Endothelial cell of umbilical vein (primary cell): ENCODE measurements at regions of chr12 and their contacts with region 1.

Region 1: GRCh38 chr12:1093166-1093751 is 102.2 kb downstream of the ERC1 start:
- DNase-seq: peak; percentile 73
- H3K4me3 ChIP-seq: no peak overlapping the region
- H3K27ac ChIP-seq: no peak overlapping the region
- H3K4me1 ChIP-seq: no peaks in the 10 kb centered on the region
- H3K27me3 ChIP-seq: no peaks in the 10 kb centered on the region
- CTCF ChIP-seq: peak; percentile 53 to 58
- POLR2A ChIP-seq: no peak

Region 2: DNA sequence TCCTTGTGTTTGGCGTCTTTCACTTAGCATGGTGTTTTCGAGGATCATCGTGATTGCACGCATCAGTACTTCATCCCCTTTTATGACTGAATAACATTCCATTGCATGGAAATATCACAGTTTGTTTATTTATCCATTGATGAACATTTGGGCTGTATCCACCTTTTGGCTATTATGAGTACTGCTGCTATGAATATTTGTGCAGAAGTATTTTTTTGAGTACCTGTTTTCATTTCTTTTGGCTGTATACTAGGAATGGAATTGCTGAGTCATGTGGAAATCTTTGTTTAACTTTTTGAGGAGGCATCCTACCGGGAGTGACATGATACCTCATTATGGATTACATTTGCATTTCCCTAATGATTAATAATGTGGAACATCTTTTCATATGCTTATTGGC is 274.5 kb before region 1 on chr12:
- CTCF ChIA-PET with region 1: interaction called, 27 read pairs
- POLR2A ChIA-PET with region 1: no interaction called
- dilution Hi-C with region 1: no loop called
- intact Hi-C with region 1: loop called (anchors 5 kb)
- DNase-seq: no peak
- H3K4me3 ChIP-seq: no peak overlapping the region
- H3K27ac ChIP-seq: no peak overlapping the region
- H3K4me1 ChIP-seq: no peaks in the 10 kb centered on the region
- H3K27me3 ChIP-seq: no peaks in the 10 kb centered on the region
- CTCF ChIP-seq: no peak
- POLR2A ChIP-seq: no peak

Region 3: DNA sequence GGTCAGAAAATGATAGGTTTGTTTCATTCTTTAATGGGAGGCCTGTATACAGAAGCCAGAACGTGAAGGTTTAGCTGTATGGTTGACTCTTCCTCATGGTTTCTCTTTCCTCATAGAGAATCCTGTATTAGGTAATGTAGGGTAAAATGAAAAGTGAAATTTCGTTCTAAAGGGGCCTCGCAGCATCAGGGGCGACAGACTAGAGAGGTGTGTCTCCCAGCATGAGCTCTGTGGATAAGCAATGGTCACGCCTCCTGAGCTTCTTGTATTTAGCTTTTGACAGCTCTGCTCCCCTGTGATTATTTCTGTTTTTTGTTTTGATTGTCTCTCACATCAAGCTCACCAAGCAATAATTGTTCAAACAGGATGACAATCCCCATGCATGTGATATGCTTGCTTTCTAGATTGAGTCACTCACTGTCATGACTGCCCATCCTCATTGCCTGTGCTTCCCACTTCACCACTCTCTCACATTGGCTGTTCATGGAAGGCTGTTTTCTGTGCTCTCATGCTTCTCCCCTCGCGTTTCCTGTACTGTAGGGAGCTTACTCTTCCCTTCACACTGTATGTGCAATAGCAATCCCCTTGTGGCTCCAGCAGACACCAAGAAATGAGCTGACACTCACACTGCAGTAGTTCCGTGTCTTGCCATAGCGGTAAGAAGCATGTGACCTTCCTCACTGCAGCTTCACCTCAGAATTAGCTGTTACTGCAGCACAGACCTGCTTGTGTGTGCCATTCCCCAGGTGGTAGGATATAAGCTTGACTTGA is 187.8 kb before region 1 on chr12:
- CTCF ChIA-PET with region 1: interaction called, 53 read pairs
- POLR2A ChIA-PET with region 1: no interaction called
- dilution Hi-C with region 1: no loop called
- intact Hi-C with region 1: loop called (anchors 5 kb)
- DNase-seq: no peak
- H3K4me3 ChIP-seq: no peak overlapping the region
- H3K27ac ChIP-seq: no peak overlapping the region
- H3K4me1 ChIP-seq: no peaks in the 10 kb centered on the region
- H3K27me3 ChIP-seq: no peaks in the 10 kb centered on the region
- CTCF ChIP-seq: no peak
- POLR2A ChIP-seq: no peak

Region 4: DNA sequence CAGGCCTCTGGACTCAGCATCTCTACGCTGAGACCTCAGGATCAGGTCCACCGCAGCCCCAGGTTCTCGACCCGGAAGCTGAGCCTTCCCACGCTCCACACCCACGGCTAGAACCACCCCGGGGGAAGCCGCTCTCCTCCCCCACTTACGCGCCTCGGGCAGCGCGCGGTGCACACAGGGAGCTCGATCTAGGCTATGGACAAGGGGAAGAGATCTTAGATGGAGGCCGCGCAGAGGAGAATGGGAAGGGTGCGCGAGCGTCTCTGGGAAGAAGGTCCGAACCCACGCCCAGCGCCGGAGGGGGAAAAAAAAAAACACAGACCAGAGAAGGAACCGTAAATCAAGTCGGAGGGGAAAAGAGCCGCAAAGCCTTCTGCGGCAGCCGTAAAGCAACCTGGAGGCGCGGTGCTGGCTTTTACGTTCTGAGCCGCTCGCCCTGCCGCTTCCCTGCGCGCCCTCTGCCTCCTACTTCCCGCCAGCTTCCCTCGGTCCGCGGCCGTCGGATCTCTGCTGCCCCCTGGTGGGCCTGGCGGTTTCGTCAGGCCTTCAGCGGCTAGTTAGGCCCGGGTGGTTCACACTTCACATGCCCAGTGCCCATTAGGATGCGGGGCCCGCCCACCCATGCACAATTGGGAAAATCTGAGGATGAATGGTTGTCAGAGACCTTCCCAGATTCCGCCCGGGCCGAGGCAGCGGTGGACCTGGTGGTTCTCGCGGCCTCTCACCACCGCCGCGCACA is 143.6 kb before region 1 on chr12 and contains the start of gene RAD52:
- CTCF ChIA-PET with region 1: interaction called, 64 read pairs
- POLR2A ChIA-PET with region 1: interaction called, 4 read pairs
- dilution Hi-C with region 1: no loop called
- intact Hi-C with region 1: loop called (anchors 5 kb)
- DNase-seq: peak; percentile 99
- H3K4me3 ChIP-seq: peak within 1 kb of the TSS; percentile 67 to 81 (median 76)
- H3K27ac ChIP-seq: peak within 1 kb of the TSS; percentile 41
- H3K4me1 ChIP-seq: peaks cover 15% of the 10 kb centered on the region
- H3K27me3 ChIP-seq: no peaks in the 10 kb centered on the region
- CTCF ChIP-seq: peak; percentile 93 to 97
- POLR2A ChIP-seq: no peak
- total RNA-seq, gene RAD52: 10.2 and 16.1 TPM in 2 replicates

Region 5: GRCh38 chr12:990661-991349 is 102.5 kb before region 1 on chr12 and contains the start of gene ERC1:
- CTCF ChIA-PET with region 1: interaction called, 66 read pairs
- POLR2A ChIA-PET with region 1: interaction called, 13 read pairs
- dilution Hi-C with region 1: no loop called
- intact Hi-C with region 1: loop called (anchors 5 kb)
- DNase-seq: peak; percentile 82
- H3K4me3 ChIP-seq: peak within 1 kb of the TSS; percentile 80 to 94 (median 80)
- H3K27ac ChIP-seq: peak within 1 kb of the TSS; percentile 80
- H3K4me1 ChIP-seq: peaks cover 25% of the 10 kb centered on the region
- H3K27me3 ChIP-seq: no peaks in the 10 kb centered on the region
- CTCF ChIP-seq: peak in 1 of 2 donors; percentile 9
- POLR2A ChIP-seq: peak; percentile 60
- total RNA-seq, gene ERC1: 60.0 and 66.1 TPM in 2 replicates

Region 6: GRCh38 chr12:1069846-1070245 is 23.4 kb before region 1 on chr12:
- CTCF ChIA-PET with region 1: interaction called, 23 read pairs
- POLR2A ChIA-PET with region 1: no interaction called
- dilution Hi-C with region 1: no loop called
- intact Hi-C with region 1: no loop called
- DNase-seq: peak; percentile 29
- H3K4me3 ChIP-seq: no peak overlapping the region
- H3K27ac ChIP-seq: no peak overlapping the region
- H3K4me1 ChIP-seq: peaks cover 7% of the 10 kb centered on the region
- H3K27me3 ChIP-seq: no peaks in the 10 kb centered on the region
- CTCF ChIP-seq: no peak
- POLR2A ChIP-seq: no peak

Region 7: GRCh38 chr12:1162081-1162760 is 69.0 kb after region 1 on chr12:
- CTCF ChIA-PET with region 1: no interaction called
- POLR2A ChIA-PET with region 1: no interaction called
- dilution Hi-C with region 1: no loop called
- intact Hi-C with region 1: no loop called
- DNase-seq: no peak
- H3K4me3 ChIP-seq: no peak overlapping the region
- H3K27ac ChIP-seq: no peak overlapping the region
- H3K4me1 ChIP-seq: peaks cover 4% of the 10 kb centered on the region
- H3K27me3 ChIP-seq: no peaks in the 10 kb centered on the region
- CTCF ChIP-seq: no peak
- POLR2A ChIP-seq: no peak

Region 8: GRCh38 chr12:1185460-1186182 is 92.4 kb after region 1 on chr12:
- CTCF ChIA-PET with region 1: no interaction called
- POLR2A ChIA-PET with region 1: no interaction called
- dilution Hi-C with region 1: no loop called
- intact Hi-C with region 1: no loop called
- DNase-seq: no peak
- H3K4me3 ChIP-seq: no peak overlapping the region
- H3K27ac ChIP-seq: peak overlapping the region; percentile 74
- H3K4me1 ChIP-seq: peaks cover 21% of the 10 kb centered on the region
- H3K27me3 ChIP-seq: no peaks in the 10 kb centered on the region
- CTCF ChIP-seq: no peak
- POLR2A ChIP-seq: no peak

Region 9: GRCh38 chr12:1488908-1489381 is 395.7 kb after region 1 on chr12:
- CTCF ChIA-PET with region 1: no interaction called
- POLR2A ChIA-PET with region 1: no interaction called
- dilution Hi-C with region 1: no loop called
- intact Hi-C with region 1: no loop called
- DNase-seq: no peak
- H3K4me3 ChIP-seq: no peak overlapping the region
- H3K27ac ChIP-seq: no peak overlapping the region
- H3K4me1 ChIP-seq: no peaks in the 10 kb centered on the region
- H3K27me3 ChIP-seq: no peaks in the 10 kb centered on the region
- CTCF ChIP-seq: no peak
- POLR2A ChIP-seq: no peak

Region 10: DNA sequence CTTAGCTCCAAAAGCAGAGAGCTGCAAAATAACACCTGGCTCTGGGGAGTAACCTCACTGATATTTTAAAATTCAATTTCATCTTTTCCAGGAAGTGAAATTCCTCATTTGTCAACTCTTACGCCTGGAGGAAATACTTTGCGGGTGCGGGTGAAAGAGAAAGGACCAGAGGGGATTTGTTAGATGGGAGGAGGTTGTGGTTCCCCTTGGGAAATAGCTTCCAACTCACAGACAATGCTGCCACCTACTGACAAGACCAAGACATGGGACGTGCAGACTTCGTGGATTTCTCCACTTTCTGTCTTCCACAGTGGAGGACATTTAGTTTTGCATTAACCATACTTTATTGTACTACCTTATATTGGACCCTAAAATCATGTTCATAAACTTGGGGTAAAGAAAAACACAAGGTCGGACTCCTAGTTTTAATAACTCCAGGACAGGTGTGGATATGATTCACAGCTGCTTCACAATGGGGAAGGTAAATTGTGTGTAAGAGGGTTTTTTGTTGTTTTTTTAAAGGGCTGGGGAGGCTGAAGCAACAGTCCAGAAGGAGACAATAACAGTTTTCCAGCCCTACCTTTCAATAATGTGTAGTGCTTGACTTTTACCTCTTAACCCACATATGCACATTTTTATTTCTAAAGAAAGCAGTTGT is 490.3 kb after region 1 on chr12:
- CTCF ChIA-PET with region 1: interaction called, 36 read pairs
- POLR2A ChIA-PET with region 1: no interaction called
- dilution Hi-C with region 1: no loop called
- intact Hi-C with region 1: no loop called
- DNase-seq: peak; percentile 80
- H3K4me3 ChIP-seq: no peak overlapping the region
- H3K27ac ChIP-seq: no peak overlapping the region
- H3K4me1 ChIP-seq: peaks cover 6% of the 10 kb centered on the region
- H3K27me3 ChIP-seq: no peaks in the 10 kb centered on the region
- CTCF ChIP-seq: peak; percentile 74 to 79
- POLR2A ChIP-seq: no peak